ENCODE measurements at regions of chr11 and their contacts with region 1.

Region 1: DNA sequence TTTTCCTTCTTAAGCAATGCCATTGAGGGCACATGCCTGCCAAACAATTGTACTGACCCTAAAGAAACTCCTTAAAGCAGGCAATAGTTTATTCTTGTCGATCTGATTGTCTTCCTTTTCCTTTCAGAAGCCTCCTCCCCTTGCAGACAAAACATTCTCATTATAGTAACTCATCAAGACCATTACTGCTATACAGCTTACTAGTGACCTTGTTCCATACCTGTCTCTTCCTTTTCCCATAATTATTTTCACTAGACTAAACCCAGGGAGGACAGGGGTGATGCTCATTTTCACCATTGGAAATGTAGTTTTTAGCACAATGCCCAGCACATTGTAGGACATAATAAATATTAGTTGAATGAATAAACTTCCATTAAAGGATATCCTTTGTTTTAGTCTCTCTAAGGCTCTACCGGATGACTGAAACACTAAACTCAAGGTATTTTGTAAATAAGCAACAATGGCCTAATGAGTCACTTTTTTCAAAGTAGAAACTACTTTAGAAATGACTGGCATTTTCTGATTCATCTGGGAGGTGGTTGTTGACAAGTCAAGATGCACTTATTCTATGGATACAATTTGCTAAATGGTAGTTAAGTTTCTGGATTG is 9.3 kb upstream of the MSANTD4 start:
- DNase-seq: no peak
- H3K4me3 Mint-ChIP-seq: no peak overlapping the region
- H3K27ac Mint-ChIP-seq: no peak overlapping the region
- H3K4me1 Mint-ChIP-seq: peaks cover 7% of the 10 kb centered on the region
- H3K27me3 Mint-ChIP-seq: peaks cover 8% of the 10 kb centered on the region

Region 2: GRCh38 chr11:106063009-106063408 is 31.7 kb after region 1 on chr11:
- intact Hi-C with region 1: loop called (anchors 2 kb)
- DNase-seq: no peak
- H3K4me3 Mint-ChIP-seq: no peak overlapping the region
- H3K27ac Mint-ChIP-seq: no peak overlapping the region
- H3K4me1 Mint-ChIP-seq: peaks cover 15% of the 10 kb centered on the region
- H3K27me3 Mint-ChIP-seq: no peaks in the 10 kb centered on the region

Measured in activated T-helper 1 cell treated with anti-CD3 and anti-CD28 coated beads, Interleukin-12 subunit alpha, Interleukin-12 subunit beta, Interleukin-2, Interleukin-4 antibody, amounts not matched to agents 30 ng/mL and 10 ng/mL and 1 ng/mL, durations not matched to agents 14 hours and 24 hours and 36 hours (primary cell).